Sciatic nerve (tissue), 2 donors: ENCODE measurements at regions of chr15 and their contacts with region 1.

Region 1: GRCh38 chr15:37007301-37007700 is 93.0 kb downstream of the MEIS2 start:
- DNase-seq: no peak
- ATAC-seq: no peak

Region 2: GRCh38 chr15:35519541-35520149 is 1487.7 kb before region 1 on chr15:
- intact Hi-C with region 1: no loop called
- DNase-seq: no peak
- ATAC-seq: peak; percentile 67

Region 3: DNA sequence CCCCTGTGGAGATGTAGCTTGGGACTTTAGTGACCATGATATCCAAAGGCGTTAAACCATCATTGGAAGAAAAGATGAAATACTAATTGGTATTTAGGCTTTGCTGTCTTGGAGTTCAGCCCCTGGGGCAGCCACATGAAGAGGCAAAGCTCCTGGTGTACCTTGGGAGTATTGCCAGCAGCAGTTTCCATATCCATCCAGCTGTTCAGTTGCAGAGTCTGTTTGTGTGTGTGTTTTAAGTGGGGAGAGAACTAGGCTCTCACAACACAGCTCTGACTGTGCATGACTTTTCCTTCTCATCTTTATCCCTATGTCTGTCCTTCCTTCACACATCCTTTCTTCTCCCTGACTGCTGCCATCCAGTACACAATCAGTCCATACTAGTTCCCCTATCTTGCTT is 329.0 kb before region 1 on chr15:
- intact Hi-C with region 1: no loop called
- DNase-seq: no peak
- ATAC-seq: no peak

Region 4: GRCh38 chr15:38528294-38528693 is 1521.0 kb after region 1 on chr15:
- intact Hi-C with region 1: loop called (anchors 5 kb)
- DNase-seq: no peak
- ATAC-seq: no peak